ENCODE measurements at regions of chr2 and their contacts with region 1.

Region 1: DNA sequence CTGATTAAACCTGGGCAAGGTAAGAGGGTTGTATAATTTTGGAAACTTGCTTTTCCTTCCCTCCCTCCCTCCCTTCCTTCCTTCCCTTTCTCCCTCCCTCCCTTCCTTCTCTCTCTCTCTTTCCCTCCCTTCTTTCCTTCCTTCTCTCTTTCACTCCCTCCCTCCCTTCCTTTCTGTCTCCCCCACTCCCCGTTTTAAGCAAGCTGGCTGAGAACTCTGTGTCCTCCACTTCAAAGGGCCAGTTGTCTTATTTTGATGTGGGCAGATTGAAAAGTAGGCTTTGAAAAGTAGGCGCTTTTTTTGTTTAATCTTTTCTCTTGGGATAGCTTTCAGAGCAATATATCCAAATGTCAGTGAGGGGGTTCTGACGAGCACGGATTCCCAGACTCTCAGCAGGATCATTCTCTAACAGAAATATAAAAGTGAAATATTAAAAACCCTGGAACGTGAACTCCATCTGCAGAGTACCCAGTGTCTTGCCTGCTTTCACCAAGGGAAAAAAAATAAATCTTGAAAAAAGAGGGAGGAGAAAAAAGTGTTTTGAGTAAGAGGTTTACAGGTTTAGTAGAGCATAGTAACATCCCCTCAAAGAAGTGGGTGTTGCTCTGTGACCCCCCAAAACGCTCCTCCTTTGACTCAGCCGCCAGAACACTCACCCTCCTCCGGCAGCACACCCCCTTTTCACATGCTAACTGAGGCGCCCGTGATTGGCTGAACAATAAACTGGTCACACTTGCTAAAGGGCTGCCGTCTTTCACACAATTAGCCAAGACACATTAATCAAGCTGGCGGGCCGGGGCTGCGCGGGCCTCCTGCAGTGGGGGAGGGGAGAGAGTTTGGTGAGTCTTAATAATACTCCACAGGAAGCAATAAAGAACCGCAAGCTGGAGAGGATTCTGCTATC is 52.2 kb downstream of the CDK15 start:
- DNase-seq: peak; percentile 55
- H3K4me3 ChIP-seq: 0 out of 2 replicates have a peak overlapping the region, but pooled peaks have one; percentile 10
- H3K27ac ChIP-seq: no peak overlapping the region
- H3K4me1 ChIP-seq: peaks cover 36% of the 10 kb centered on the region
- H3K27me3 ChIP-seq: no peaks in the 10 kb centered on the region

Region 2: GRCh38 chr2:201642579-201643215 is 215.8 kb before region 1 on chr2:
- in situ Hi-C with region 1: no loop called
- DNase-seq: peak; percentile 91
- H3K4me3 ChIP-seq: peak overlapping the region; percentile 91
- H3K27ac ChIP-seq: peak overlapping the region; percentile 96
- H3K4me1 ChIP-seq: peaks cover 15% of the 10 kb centered on the region
- H3K27me3 ChIP-seq: no peaks in the 10 kb centered on the region

Region 3: GRCh38 chr2:202033321-202034248 is 175.1 kb after region 1 on chr2 and contains the start of gene FZD7:
- in situ Hi-C with region 1: loop called (anchors 10 kb)
- DNase-seq: peak; percentile 97
- H3K4me3 ChIP-seq: peak within 1 kb of the TSS; percentile 90
- H3K27ac ChIP-seq: peak within 1 kb of the TSS; percentile 89
- H3K4me1 ChIP-seq: peaks cover 26% of the 10 kb centered on the region
- H3K27me3 ChIP-seq: no peaks in the 10 kb centered on the region
- total RNA-seq, gene FZD7: 53.7 and 56.4 TPM in 2 replicates

Region 4: DNA sequence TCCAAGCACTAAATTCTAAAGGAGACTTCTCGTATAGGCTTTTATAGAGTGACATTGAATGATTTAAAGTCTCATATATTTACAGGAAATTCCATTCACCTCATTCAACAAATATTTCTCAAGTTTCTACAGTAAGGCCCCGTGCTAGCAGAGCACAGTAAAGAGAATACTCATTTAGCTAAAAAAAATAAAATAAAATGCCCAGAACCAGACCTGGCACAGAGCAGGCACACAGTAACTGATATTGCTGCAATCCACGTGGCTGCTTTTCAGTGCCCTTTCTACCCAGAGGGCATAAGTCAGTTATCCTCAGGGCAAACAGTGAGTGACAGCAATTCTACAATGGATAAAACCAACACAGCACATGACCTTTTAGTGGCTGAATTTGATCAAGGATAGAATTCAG is 327.3 kb after region 1 on chr2:
- in situ Hi-C with region 1: loop called (anchors 10 kb)
- DNase-seq: peak; percentile 54
- H3K4me3 ChIP-seq: no peak overlapping the region
- H3K27ac ChIP-seq: peak overlapping the region; percentile 28
- H3K4me1 ChIP-seq: peaks cover 10% of the 10 kb centered on the region
- H3K27me3 ChIP-seq: no peaks in the 10 kb centered on the region